Heart right ventricle (tissue), 16 donors: ENCODE measurements at regions of chr3 and their contacts with region 1.

Region 1: GRCh38 chr3:9649791-9650521 is 651 bp downstream of the MTMR14 start:
- DNase-seq: no peak
- ATAC-seq: peak in 2 of 8 donors; percentile 1 to 24
- H3K4me3 ChIP-seq: peak overlapping the region; percentile 68 to 100 (median 92)
- H3K27ac ChIP-seq: peak overlapping the region; percentile 76 to 96 (median 90)
- H3K4me1 ChIP-seq: peaks cover 19 to 48% (median 43%) of the 10 kb centered on the region in 9 donors
- H3K27me3 ChIP-seq: no peaks in the 10 kb centered on the region
- CTCF ChIP-seq: no peak

Region 2: GRCh38 chr3:9352917-9353752 is 296.8 kb before region 1 on chr3:
- intact Hi-C with region 1: loop called in 1 of 10 experiments (anchors 10 kb)
- DNase-seq: peak; percentile 45 to 70
- ATAC-seq: peak; percentile 61 to 87 (median 80)
- H3K4me3 ChIP-seq: no peak overlapping the region
- H3K27ac ChIP-seq: no peak overlapping the region
- H3K4me1 ChIP-seq: peaks cover 0 to 14% (median 4%) of the 10 kb centered on the region in 9 donors
- H3K27me3 ChIP-seq: no peaks in the 10 kb centered on the region
- CTCF ChIP-seq: peak; percentile 77 to 95 (median 88)

Region 3: GRCh38 chr3:9615003-9615625 is 34.8 kb before region 1 on chr3:
- intact Hi-C with region 1: no loop called
- DNase-seq: no peak
- ATAC-seq: no peak
- H3K4me3 ChIP-seq: no peak overlapping the region
- H3K27ac ChIP-seq: no peak overlapping the region
- H3K4me1 ChIP-seq: no peaks in the 10 kb centered on the region
- H3K27me3 ChIP-seq: peaks cover 0 to 5% (median 0%) of the 10 kb centered on the region in 7 donors
- CTCF ChIP-seq: no peak

Region 4: GRCh38 chr3:9792405-9793160 is 142.6 kb after region 1 on chr3 and contains the starts of genes ARPC4 and TADA3:
- intact Hi-C with region 1: loop called in 1 of 10 experiments (anchors 5 kb)
- DNase-seq: peak; percentile 94
- ATAC-seq: peak; percentile 93 to 97 (median 94)
- H3K4me3 ChIP-seq: peak within 1 kb of the TSS; percentile 63 to 100 (median 80)
- H3K27ac ChIP-seq: peak within 1 kb of the TSS; percentile 91 to 98 (median 97)
- H3K4me1 ChIP-seq: peaks cover 5 to 51% (median 35%) of the 10 kb centered on the region in 9 donors
- H3K27me3 ChIP-seq: no peaks in the 10 kb centered on the region
- CTCF ChIP-seq: peak in 1 of 9 donors; percentile 20
- total RNA-seq, gene ARPC4: 40.6 to 111 (median 55.0) TPM
- total RNA-seq, gene TADA3: 38.5 to 59.6 (median 42.9) TPM